Naive thymus-derived CD4-positive, alpha-beta T cell (primary cell): ENCODE measurements at regions of chr21 and their contacts with region 1.

Region 1: GRCh38 chr21:38733973-38734546 is 71.7 kb upstream of the ETS2 start:
- DNase-seq: peak; percentile 20 to 80 (median 49)
- ATAC-seq: peak; percentile 80
- H3K4me3 ChIP-seq: peak overlapping the region; percentile 53
- H3K4me3 Mint-ChIP-seq: peak overlapping the region; percentile 78 to 89 (median 84)
- H3K27ac ChIP-seq: no peak overlapping the region
- H3K27ac Mint-ChIP-seq: no peak overlapping the region
- H3K4me1 ChIP-seq: peaks cover 5 to 7% of the 10 kb centered on the region in 2 donors
- H3K4me1 Mint-ChIP-seq: peaks cover 4 to 12% (median 8%) of the 10 kb centered on the region in 7 donors
- H3K27me3 ChIP-seq: peaks cover 0 to 5% of the 10 kb centered on the region in 2 donors
- H3K27me3 Mint-ChIP-seq: peaks cover 24 to 51% (median 30%) of the 10 kb centered on the region in 5 donors

Region 2: GRCh38 chr21:37811711-37812110 is 922.3 kb before region 1 on chr21:
- CTCF ChIA-PET with region 1: no interaction called
- POLR2A ChIA-PET with region 1: no interaction called
- intact Hi-C with region 1: no loop called
- DNase-seq: no peak
- ATAC-seq: no peak
- H3K4me3 ChIP-seq: no peak overlapping the region
- H3K4me3 Mint-ChIP-seq: no peak overlapping the region
- H3K27ac ChIP-seq: no peak overlapping the region
- H3K27ac Mint-ChIP-seq: no peak overlapping the region
- H3K4me1 ChIP-seq: no peaks in the 10 kb centered on the region
- H3K4me1 Mint-ChIP-seq: no peaks in the 10 kb centered on the region
- H3K27me3 ChIP-seq: no peaks in the 10 kb centered on the region
- H3K27me3 Mint-ChIP-seq: peaks cover 0 to 36% (median 30%) of the 10 kb centered on the region in 5 donors

Region 3: GRCh38 chr21:38683226-38683625 is 50.8 kb before region 1 on chr21:
- CTCF ChIA-PET with region 1: no interaction called
- POLR2A ChIA-PET with region 1: no interaction called
- intact Hi-C with region 1: no loop called
- DNase-seq: no peak
- ATAC-seq: no peak
- H3K4me3 ChIP-seq: no peak overlapping the region
- H3K4me3 Mint-ChIP-seq: no peak overlapping the region
- H3K27ac ChIP-seq: no peak overlapping the region
- H3K27ac Mint-ChIP-seq: no peak overlapping the region
- H3K4me1 ChIP-seq: no peaks in the 10 kb centered on the region
- H3K4me1 Mint-ChIP-seq: peaks cover 0 to 3% (median 0%) of the 10 kb centered on the region in 7 donors
- H3K27me3 ChIP-seq: no peaks in the 10 kb centered on the region
- H3K27me3 Mint-ChIP-seq: peaks cover 24 to 37% (median 32%) of the 10 kb centered on the region in 5 donors

Region 4: GRCh38 chr21:38766987-38767722 is 33.1 kb after region 1 on chr21:
- CTCF ChIA-PET with region 1: interaction called, 8 read pairs
- POLR2A ChIA-PET with region 1: no interaction called
- intact Hi-C with region 1: loop called in 1 of 2 experiments (anchors 1 kb)
- DNase-seq: peak; percentile 21 to 85 (median 77)
- ATAC-seq: peak; percentile 93
- H3K4me3 ChIP-seq: peak overlapping the region; percentile 74
- H3K4me3 Mint-ChIP-seq: peak overlapping the region; percentile 76 to 98 (median 90)
- H3K27ac ChIP-seq: peak overlapping the region; percentile 67
- H3K27ac Mint-ChIP-seq: peak overlapping the region; percentile 93 to 99 (median 95)
- H3K4me1 ChIP-seq: peaks cover 24% of the 10 kb centered on the region in 2 donors
- H3K4me1 Mint-ChIP-seq: peaks cover 15 to 45% (median 35%) of the 10 kb centered on the region in 7 donors
- H3K27me3 ChIP-seq: no peaks in the 10 kb centered on the region
- H3K27me3 Mint-ChIP-seq: no peaks in the 10 kb centered on the region

Region 5: GRCh38 chr21:38831526-38832467 is 97.7 kb after region 1 on chr21:
- CTCF ChIA-PET with region 1: no interaction called
- POLR2A ChIA-PET with region 1: no interaction called
- intact Hi-C with region 1: loop called in 1 of 2 experiments (anchors 1 kb)
- DNase-seq: peak in 6 of 9 donors; percentile 14 to 52 (median 31)
- ATAC-seq: peak; percentile 90
- H3K4me3 ChIP-seq: no peak overlapping the region
- H3K4me3 Mint-ChIP-seq: peak overlapping the region in 1 of 10 donors; percentile 11
- H3K27ac ChIP-seq: no peak overlapping the region
- H3K27ac Mint-ChIP-seq: peak overlapping the region in 3 of 9 donors; percentile 24 to 28 (median 24)
- H3K4me1 ChIP-seq: no peaks in the 10 kb centered on the region
- H3K4me1 Mint-ChIP-seq: peaks cover 11 to 17% (median 13%) of the 10 kb centered on the region in 7 donors
- H3K27me3 ChIP-seq: no peaks in the 10 kb centered on the region
- H3K27me3 Mint-ChIP-seq: peaks cover 0 to 7% (median 4%) of the 10 kb centered on the region in 5 donors

Region 6: DNA sequence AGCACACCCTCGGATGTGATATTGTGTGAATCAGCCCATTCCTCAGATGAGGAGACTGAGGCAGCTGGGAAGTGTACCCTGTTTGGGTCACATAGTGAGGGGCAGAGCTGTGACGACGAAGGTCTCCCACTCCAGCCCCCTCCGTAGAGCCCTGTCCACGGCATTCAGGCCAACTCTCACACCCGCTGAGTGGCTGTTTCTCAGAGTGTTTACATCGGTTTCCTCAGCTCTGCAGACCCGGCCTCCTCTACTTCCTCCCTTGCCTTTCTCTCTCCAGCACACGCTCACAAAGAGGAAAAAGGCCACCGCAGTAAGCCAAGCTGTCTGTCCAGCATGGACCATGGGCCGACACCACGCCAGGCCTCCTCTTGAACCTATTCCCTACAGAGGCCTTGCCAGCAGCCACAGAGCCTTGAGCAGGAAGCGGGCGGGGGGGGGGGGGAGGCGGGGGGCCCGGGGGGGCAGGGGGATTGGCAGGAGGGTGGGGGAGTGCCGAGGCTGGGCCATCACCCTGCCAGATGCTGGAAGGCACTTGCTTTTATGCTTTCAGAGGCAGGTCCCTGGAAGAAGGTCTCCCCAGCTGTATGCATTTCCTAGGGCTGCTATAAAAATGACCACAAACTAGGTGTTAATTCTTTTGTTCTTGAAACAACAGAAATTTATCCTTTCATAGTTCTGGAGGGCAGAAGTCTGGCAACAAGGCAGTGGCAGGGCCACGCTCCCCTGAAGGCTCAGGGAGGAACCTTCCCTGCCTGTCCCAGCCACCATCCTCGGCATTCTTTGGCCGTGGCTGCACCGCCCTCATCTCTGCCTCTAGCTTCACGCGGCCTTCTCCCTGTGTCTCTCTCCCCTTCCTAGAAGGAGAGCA is 270.8 kb after region 1 on chr21:
- CTCF ChIA-PET with region 1: no interaction called
- POLR2A ChIA-PET with region 1: no interaction called
- intact Hi-C with region 1: loop called in 1 of 2 experiments (anchors 10 kb)
- DNase-seq: peak in 4 of 9 donors; percentile 5 to 23 (median 18)
- ATAC-seq: peak; percentile 53
- H3K4me3 ChIP-seq: no peak overlapping the region
- H3K4me3 Mint-ChIP-seq: peak overlapping the region in 8 of 10 donors; percentile 52 to 81 (median 64)
- H3K27ac ChIP-seq: no peak overlapping the region
- H3K27ac Mint-ChIP-seq: peak overlapping the region in 5 of 9 donors; percentile 48 to 96 (median 85)
- H3K4me1 ChIP-seq: no peaks in the 10 kb centered on the region
- H3K4me1 Mint-ChIP-seq: peaks cover 7 to 49% (median 22%) of the 10 kb centered on the region in 7 donors
- H3K27me3 ChIP-seq: no peaks in the 10 kb centered on the region
- H3K27me3 Mint-ChIP-seq: peaks cover 0 to 5% (median 4%) of the 10 kb centered on the region in 5 donors

Region 7: GRCh38 chr21:39137248-39138178 is 403.5 kb after region 1 on chr21:
- CTCF ChIA-PET with region 1: no interaction called
- POLR2A ChIA-PET with region 1: no interaction called
- intact Hi-C with region 1: loop called (anchors 1 kb)
- DNase-seq: no peak
- ATAC-seq: no peak
- H3K4me3 ChIP-seq: no peak overlapping the region
- H3K4me3 Mint-ChIP-seq: no peak overlapping the region
- H3K27ac ChIP-seq: no peak overlapping the region
- H3K27ac Mint-ChIP-seq: no peak overlapping the region
- H3K4me1 ChIP-seq: no peaks in the 10 kb centered on the region
- H3K4me1 Mint-ChIP-seq: no peaks in the 10 kb centered on the region
- H3K27me3 ChIP-seq: no peaks in the 10 kb centered on the region
- H3K27me3 Mint-ChIP-seq: peaks cover 0 to 4% (median 0%) of the 10 kb centered on the region in 5 donors

Region 8: DNA sequence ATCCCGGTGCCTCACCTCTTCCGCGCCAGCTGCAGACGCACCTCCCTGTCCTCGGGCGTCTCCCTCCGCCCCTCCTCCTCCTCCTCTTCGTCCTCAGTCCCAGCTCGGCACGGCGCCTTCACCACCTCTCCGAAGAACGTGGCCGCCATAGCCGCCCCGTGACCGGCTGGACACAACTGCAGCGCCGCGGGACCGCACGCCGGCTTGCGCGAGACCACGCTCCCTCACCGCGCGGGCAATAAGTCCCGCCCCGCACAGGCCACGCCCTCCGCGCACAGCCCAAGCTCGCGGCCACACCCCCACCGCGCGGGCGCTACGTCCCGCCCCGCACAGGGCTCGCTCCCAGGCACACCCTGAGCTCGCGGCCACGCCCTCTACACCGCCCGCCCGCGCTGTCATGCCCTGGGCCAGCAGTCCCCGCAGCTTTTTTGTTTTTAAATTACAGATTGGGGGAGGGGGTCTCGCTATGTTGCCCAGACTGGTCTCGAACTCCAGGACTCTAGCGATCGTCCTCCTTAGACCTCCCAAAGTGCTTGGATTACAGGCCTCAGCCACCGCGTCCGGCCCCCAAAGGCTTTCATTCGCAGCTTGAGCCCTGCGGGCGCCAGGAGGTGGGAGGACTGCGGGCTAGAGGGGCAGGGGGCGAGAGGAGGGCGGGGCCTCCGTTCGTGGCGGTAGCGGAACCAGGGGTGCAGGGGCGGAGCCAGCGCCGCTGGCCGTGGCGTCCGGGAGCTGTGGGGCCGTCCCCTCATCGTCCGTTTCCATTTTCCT is 449.4 kb after region 1 on chr21 and contains the start of gene PSMG1:
- CTCF ChIA-PET with region 1: no interaction called
- POLR2A ChIA-PET with region 1: no interaction called
- intact Hi-C with region 1: loop called in 1 of 2 experiments (anchors 2 kb)
- DNase-seq: peak; percentile 89 to 96 (median 94)
- ATAC-seq: peak; percentile 99
- H3K4me3 ChIP-seq: peak within 1 kb of the TSS; percentile 86
- H3K4me3 Mint-ChIP-seq: peak within 1 kb of the TSS; percentile 92 to 100 (median 97)
- H3K27ac ChIP-seq: peak within 1 kb of the TSS; percentile 93
- H3K27ac Mint-ChIP-seq: peak within 1 kb of the TSS; percentile 88 to 98 (median 95)
- H3K4me1 ChIP-seq: peaks cover 9% of the 10 kb centered on the region in 2 donors
- H3K4me1 Mint-ChIP-seq: peaks cover 28 to 78% (median 52%) of the 10 kb centered on the region in 7 donors
- H3K27me3 ChIP-seq: no peaks in the 10 kb centered on the region
- H3K27me3 Mint-ChIP-seq: no peaks in the 10 kb centered on the region
- total RNA-seq, gene PSMG1: 9.8 to 62.5 (median 16.9) TPM

Region 9: DNA sequence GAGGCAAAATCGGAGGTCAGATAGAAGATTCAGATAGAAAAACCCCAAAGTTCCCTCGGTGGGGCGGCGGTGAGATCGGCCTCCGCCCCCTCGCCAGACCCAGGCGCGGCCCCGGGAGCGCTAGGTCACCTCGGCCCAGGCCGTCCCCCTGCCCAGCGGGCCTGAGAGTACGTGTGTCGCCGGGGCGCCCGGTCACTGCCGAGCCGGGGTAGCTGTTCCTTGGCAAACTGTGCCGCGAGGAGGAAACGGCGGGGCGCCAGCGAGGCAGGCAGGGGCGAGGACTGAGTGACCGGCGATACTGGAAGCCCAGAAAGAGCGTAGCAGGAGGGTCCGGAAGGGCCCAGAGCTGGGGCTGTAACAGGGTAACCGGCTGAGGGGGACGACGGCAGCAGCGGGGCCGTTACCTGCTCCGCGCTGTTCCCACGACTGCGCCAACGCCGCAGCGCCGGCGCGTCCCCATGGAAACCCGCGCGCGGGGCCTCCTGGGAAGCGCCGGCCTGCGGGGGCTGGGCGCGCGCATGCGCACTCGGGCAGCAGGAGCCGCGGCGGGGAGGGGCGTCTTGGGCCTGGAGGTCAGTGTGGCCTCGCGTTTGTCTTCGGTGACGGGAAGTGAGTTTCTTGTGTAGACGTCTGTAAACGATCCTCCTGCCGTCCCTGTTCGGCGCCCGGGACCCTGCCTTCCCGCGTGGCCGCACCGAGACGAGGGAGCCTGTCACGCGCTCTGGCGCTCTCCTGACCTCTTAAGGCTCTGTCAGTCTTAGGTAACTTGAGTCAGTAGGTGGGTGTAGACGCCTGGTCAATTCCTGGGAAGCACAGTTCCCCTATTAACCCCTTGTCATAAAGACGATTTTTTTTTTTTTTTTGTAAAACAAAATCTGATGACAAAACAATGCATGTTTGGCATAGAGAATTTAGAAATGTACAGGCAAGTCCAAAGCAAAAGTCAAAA is 711.5 kb after region 1 on chr21 and contains the start of gene LCA5L:
- CTCF ChIA-PET with region 1: no interaction called
- POLR2A ChIA-PET with region 1: no interaction called
- intact Hi-C with region 1: loop called in 1 of 2 experiments (anchors 1 kb)
- DNase-seq: peak; percentile 80 to 96 (median 90)
- ATAC-seq: peak; percentile 93
- H3K4me3 ChIP-seq: peak within 1 kb of the TSS; percentile 83
- H3K4me3 Mint-ChIP-seq: peak within 1 kb of the TSS; percentile 91 to 99 (median 94)
- H3K27ac ChIP-seq: peak within 1 kb of the TSS; percentile 76
- H3K27ac Mint-ChIP-seq: peak within 1 kb of the TSS; percentile 86 to 98 (median 94)
- H3K4me1 ChIP-seq: peaks cover 11 to 13% of the 10 kb centered on the region in 2 donors
- H3K4me1 Mint-ChIP-seq: peaks cover 8 to 26% (median 14%) of the 10 kb centered on the region in 7 donors
- H3K27me3 ChIP-seq: peaks cover 0 to 2% of the 10 kb centered on the region in 2 donors
- H3K27me3 Mint-ChIP-seq: peaks cover 0 to 44% (median 14%) of the 10 kb centered on the region in 5 donors
- total RNA-seq, gene LCA5L: not detected